ENCODE measurements at regions of chr13 and their contacts with region 1.

Region 1: DNA sequence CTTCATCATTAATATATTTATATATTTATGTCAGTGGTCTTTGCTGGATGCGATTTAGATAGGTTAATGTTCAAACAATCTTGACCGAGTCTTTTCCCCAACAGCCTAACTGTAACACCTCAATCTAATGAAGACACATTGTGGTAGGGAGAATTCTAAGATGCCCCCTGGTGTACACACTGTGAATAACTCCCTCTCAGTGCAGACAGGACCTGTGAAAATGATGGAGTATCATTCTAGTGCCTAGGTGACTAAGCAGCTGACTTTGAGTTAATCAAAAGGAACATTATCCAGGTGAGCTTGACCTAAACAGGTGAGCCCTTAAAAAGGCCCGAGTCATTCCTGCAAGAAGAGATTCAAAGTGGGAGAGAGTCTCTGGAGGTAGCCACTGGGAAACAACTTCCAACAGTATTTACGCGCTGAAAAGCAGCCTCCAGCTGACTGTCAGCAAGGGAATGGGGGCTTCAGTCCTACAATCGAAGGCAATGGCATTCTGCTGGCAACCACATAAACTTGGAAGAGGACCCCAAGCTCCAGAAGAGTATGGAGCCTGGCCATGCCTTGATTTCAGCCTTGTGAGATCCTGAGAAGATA is 28.0 kb upstream of the KBTBD7 start:
- DNase-seq: no peak
- ATAC-seq: peak; percentile 99
- H3K4me3 Mint-ChIP-seq: no peak overlapping the region
- H3K27ac Mint-ChIP-seq: no peak overlapping the region
- H3K4me1 Mint-ChIP-seq: peaks cover 3% of the 10 kb centered on the region
- H3K27me3 Mint-ChIP-seq: no peaks in the 10 kb centered on the region
- CTCF ChIP-seq: no peak

Region 2: GRCh38 chr13:40974460-40975407 is 247.6 kb before region 1 on chr13:
- CTCF ChIA-PET with region 1: no interaction called
- POLR2A ChIA-PET with region 1: no interaction called
- intact Hi-C with region 1: loop called (anchors 5 kb)
- DNase-seq: no peak
- ATAC-seq: peak; percentile 89
- H3K4me3 Mint-ChIP-seq: peak overlapping the region; percentile 72
- H3K27ac Mint-ChIP-seq: peak overlapping the region; percentile 59
- H3K4me1 Mint-ChIP-seq: peaks cover 97% of the 10 kb centered on the region
- H3K27me3 Mint-ChIP-seq: no peaks in the 10 kb centered on the region
- CTCF ChIP-seq: no peak

Region 3: GRCh38 chr13:41075034-41075433 is 147.3 kb before region 1 on chr13:
- CTCF ChIA-PET with region 1: interaction called, 33 read pairs
- POLR2A ChIA-PET with region 1: no interaction called
- intact Hi-C with region 1: loop called (anchors 1 kb)
- DNase-seq: no peak
- ATAC-seq: peak; percentile 58
- H3K4me3 Mint-ChIP-seq: no peak overlapping the region
- H3K27ac Mint-ChIP-seq: no peak overlapping the region
- H3K4me1 Mint-ChIP-seq: no peaks in the 10 kb centered on the region
- H3K27me3 Mint-ChIP-seq: no peaks in the 10 kb centered on the region
- CTCF ChIP-seq: no peak

Region 4: DNA sequence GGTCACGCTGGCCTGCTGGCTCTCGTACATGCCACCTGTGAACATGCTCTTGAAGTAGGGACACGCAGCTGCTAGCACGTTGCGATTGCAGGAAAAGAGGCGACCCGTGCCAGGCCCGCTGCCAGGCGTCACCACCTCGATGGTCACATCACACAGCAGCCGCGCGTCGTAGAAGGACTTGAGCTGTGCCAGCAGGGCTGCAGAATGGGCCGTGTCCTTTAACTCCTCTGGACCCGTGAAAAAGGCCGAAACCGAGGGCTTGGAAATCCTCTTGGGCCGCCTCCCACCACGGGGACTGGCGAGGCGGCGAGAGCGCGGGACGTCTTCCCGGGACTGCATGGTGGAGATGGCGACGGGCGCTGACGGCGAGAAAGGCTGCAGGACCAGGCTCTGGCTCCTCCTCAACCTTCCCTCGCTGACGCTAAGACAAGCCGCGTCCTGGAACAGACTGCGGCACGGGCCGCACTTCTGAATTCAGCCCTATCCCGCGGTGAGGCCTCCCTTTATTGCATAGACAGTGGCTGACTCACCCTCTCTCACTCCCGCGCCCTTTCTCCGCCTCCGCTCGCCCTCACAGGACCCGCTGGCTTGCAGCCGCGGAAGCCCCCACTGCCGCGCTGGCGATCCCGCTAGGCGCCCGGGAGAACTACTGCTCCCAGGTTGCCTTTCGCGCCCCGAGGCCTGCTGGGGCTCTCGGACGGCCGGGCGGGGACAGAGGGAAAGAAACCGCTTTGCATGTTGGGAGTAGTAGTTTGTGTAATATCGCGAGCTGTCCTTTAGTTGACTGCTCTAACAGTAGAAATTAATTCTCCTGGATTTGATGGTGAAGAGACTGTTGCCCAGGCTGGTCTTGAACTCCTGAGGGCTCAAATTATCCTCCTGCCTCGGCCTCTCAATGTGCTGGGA is 28.2 kb before region 1 on chr13 and contains the start of gene KBTBD7:
- CTCF ChIA-PET with region 1: interaction called, 8 read pairs
- POLR2A ChIA-PET with region 1: no interaction called
- intact Hi-C with region 1: loop called (anchors 1 kb)
- DNase-seq: peak; percentile 85
- ATAC-seq: peak; percentile 92
- H3K4me3 Mint-ChIP-seq: peak within 1 kb of the TSS; percentile 93
- H3K27ac Mint-ChIP-seq: peak within 1 kb of the TSS; percentile 94
- H3K4me1 Mint-ChIP-seq: peaks cover 54% of the 10 kb centered on the region
- H3K27me3 Mint-ChIP-seq: no peaks in the 10 kb centered on the region
- CTCF ChIP-seq: no peak
- total RNA-seq, gene KBTBD7: 5.2 and 6.4 TPM in 2 replicates

Measured in activated B cell treated with CpG ODN at 0.5 μM for 24 hours (primary cell).